ENCODE measurements at regions of chr20 and their contacts with region 1.

Region 1: DNA sequence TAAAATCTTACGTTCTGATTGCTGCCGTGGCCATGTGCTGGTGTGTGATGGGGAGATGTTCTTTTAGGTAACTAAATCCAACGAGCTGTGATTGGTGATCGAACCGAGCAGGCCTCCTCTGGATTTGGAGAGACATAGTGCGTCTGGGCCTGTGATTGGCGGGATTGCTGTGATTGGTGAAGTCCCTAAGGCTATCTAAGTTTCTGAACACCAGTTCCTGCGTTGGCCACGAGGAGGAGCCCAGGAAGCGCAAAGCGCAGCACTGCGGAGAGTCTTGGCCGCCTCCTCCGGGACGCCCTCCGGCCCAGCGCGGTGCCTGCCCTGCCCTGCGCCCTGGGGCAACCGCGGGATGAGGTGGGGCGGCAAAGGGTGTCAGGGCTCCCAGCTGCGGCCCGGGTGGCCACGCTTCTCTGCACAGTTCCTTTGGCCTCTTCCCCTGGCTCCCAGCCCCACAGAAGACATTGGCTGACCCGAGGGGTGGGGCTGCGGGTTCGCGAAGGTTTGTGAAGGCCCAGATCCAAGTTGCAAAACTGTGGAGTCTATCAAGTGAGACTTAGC is 33.0 kb downstream of the HNF4A start:
- DNase-seq: peak; percentile 35
- ATAC-seq: peak; percentile 79
- H3K4me3 Mint-ChIP-seq: no peak overlapping the region
- H3K27ac Mint-ChIP-seq: no peak overlapping the region
- H3K4me1 Mint-ChIP-seq: peaks cover 5% of the 10 kb centered on the region
- H3K27me3 Mint-ChIP-seq: peaks cover 24% of the 10 kb centered on the region
- CTCF ChIP-seq: no peak

Region 2: DNA sequence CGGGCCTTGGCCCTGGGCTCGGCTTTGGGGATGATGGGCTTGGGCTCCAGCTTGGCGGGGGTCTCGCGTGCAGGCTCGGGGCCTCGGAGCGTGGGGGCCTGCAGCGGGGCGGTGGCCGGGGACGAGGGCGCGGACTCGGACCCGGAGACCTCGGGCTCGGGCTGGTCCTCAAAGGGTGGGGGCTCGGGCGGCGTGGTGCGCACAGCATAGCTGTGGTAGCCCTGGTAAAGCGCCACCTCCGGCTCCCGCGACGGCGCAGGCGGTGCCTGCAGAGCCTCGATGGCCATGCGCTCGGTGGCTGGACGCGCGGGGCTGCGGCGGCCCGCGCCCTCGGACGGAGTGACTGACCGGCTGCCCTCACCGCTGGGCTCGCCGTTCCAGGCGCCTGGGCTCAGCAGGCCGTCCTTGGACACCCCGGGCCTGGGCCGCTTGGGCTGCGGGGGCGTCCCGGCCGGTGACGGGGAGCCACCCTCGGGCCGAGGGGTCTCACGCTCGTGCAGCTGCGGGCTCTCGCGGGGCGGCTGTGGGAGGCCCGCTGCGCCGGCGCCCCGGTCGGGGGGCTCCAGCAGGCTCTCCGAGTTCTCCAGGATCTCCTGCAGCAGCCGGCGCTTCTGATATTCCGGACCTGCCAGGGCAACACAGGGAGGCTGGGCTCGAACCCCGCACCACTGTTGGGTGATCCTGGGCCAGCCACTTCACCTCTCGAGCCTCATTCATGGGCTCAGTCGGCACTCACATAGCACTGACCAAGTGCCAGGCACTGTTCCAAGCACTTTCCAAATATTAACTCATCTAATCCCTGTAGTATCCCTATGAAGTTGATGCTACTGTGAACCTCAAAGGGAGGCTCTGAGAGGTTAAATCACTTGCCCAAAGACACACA is 272.5 kb before region 1 on chr20:
- CTCF ChIA-PET with region 1: no interaction called
- POLR2A ChIA-PET with region 1: no interaction called
- intact Hi-C with region 1: loop called (anchors 5 kb)
- DNase-seq: no peak
- ATAC-seq: no peak
- H3K4me3 Mint-ChIP-seq: no peak overlapping the region
- H3K27ac Mint-ChIP-seq: no peak overlapping the region
- H3K4me1 Mint-ChIP-seq: no peaks in the 10 kb centered on the region
- H3K27me3 Mint-ChIP-seq: peaks cover 46% of the 10 kb centered on the region
- CTCF ChIP-seq: no peak

Region 3: DNA sequence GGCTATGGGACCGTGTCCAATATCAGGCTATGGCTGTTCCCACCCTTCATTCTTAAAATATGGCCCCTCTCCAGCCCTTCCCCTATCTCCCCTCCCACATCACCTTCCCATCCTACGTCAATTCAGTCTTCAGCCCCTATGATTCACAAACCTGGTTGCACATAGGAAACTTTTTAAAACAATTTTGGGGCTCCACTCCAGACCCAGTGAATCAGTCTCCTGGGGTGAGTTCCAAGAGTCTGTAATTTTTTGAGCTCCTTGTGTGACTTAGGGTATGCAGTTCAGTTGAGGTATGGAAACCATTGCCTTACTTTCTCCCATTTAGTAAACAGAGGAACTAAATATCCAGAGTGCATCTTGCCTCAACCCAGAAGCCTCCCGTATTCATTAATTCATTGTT is 27.5 kb before region 1 on chr20:
- CTCF ChIA-PET with region 1: no interaction called
- POLR2A ChIA-PET with region 1: no interaction called
- intact Hi-C with region 1: no loop called
- DNase-seq: no peak
- ATAC-seq: no peak
- H3K4me3 Mint-ChIP-seq: no peak overlapping the region
- H3K27ac Mint-ChIP-seq: no peak overlapping the region
- H3K4me1 Mint-ChIP-seq: no peaks in the 10 kb centered on the region
- H3K27me3 Mint-ChIP-seq: peaks cover 10% of the 10 kb centered on the region
- CTCF ChIP-seq: no peak

Region 4: DNA sequence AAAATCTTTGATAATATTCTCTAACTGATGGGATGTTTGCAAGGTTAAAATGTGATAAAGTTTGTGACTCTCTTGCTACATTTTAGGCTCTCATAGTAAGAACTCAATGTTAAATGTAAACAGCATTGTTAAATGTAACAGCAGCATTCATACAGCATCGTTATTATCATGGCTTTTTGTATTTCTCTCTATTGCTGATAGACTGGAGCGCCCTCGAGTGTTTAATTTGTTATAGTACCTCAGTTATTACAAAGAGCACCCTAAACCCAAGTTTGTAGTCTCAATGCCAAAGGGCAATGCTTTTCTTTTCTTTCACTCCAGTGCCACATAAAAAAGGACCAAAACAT is 72.2 kb after region 1 on chr20:
- CTCF ChIA-PET with region 1: no interaction called
- POLR2A ChIA-PET with region 1: no interaction called
- intact Hi-C with region 1: loop called (anchors 5 kb)
- DNase-seq: no peak
- ATAC-seq: no peak
- H3K4me3 Mint-ChIP-seq: no peak overlapping the region
- H3K27ac Mint-ChIP-seq: no peak overlapping the region
- H3K4me1 Mint-ChIP-seq: no peaks in the 10 kb centered on the region
- H3K27me3 Mint-ChIP-seq: no peaks in the 10 kb centered on the region
- CTCF ChIP-seq: no peak

Region 5: GRCh38 chr20:44576297-44576696 is 187.8 kb after region 1 on chr20:
- CTCF ChIA-PET with region 1: no interaction called
- POLR2A ChIA-PET with region 1: no interaction called
- intact Hi-C with region 1: loop called (anchors 1 kb)
- DNase-seq: no peak
- ATAC-seq: peak; percentile 80
- H3K4me3 Mint-ChIP-seq: peak overlapping the region; percentile 72
- H3K27ac Mint-ChIP-seq: peak overlapping the region; percentile 89
- H3K4me1 Mint-ChIP-seq: peaks cover 44% of the 10 kb centered on the region
- H3K27me3 Mint-ChIP-seq: no peaks in the 10 kb centered on the region
- CTCF ChIP-seq: no peak

Region 6: GRCh38 chr20:44733341-44734069 is 345.0 kb after region 1 on chr20:
- CTCF ChIA-PET with region 1: interaction called, 6 read pairs
- POLR2A ChIA-PET with region 1: no interaction called
- intact Hi-C with region 1: loop called (anchors 1 kb)
- DNase-seq: peak; percentile 27
- ATAC-seq: peak; percentile 74
- H3K4me3 Mint-ChIP-seq: no peak overlapping the region
- H3K27ac Mint-ChIP-seq: no peak overlapping the region
- H3K4me1 Mint-ChIP-seq: peaks cover 8% of the 10 kb centered on the region
- H3K27me3 Mint-ChIP-seq: no peaks in the 10 kb centered on the region
- CTCF ChIP-seq: no peak

Region 7: DNA sequence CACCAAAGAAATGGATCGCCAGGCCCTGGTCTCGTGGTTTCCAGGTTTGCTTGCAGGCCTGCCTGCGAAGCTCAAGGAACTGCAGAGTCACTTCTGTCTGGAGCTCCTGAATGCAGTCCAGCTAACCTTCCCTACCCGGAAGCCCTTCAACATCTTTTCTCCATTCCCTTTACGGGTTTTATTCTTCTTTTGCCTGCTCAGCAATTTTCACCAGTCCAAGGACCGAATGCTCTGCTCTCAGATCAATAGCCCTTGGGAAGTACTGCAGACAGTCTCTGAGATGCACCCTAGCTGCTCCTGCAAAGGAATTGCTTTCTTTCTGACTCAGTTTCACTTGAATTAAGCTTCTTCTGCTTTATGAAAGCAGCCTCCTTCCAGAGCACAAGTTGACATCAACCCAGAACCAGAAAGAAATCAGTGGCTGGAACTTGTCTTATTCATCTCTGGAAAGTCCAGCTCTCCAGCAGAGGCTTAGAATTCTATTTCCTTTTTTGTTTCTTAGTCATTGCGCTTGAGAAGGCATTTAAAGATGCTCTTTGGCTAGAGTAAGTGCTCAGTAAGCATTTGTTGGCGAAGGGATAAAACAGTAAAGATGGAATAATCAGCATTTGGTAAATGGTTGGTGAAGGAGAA is 478.3 kb after region 1 on chr20:
- CTCF ChIA-PET with region 1: interaction called, 7 read pairs
- POLR2A ChIA-PET with region 1: no interaction called
- intact Hi-C with region 1: loop called (anchors 1 kb)
- DNase-seq: no peak
- ATAC-seq: no peak
- H3K4me3 Mint-ChIP-seq: no peak overlapping the region
- H3K27ac Mint-ChIP-seq: no peak overlapping the region
- H3K4me1 Mint-ChIP-seq: peaks cover 13% of the 10 kb centered on the region
- H3K27me3 Mint-ChIP-seq: peaks cover 5% of the 10 kb centered on the region
- CTCF ChIP-seq: no peak

Measured in activated B cell treated with CpG ODN at 0.5 μM for 24 hours (primary cell).